ENCODE measurements at regions of chr1 and their contacts with region 1.

Region 1: GRCh38 chr1:65687428-65688214 is 105.1 kb upstream of the PDE4B start:
- DNase-seq: peak; percentile 43
- ATAC-seq: peak; percentile 95
- H3K4me3 ChIP-seq: no peak overlapping the region
- H3K27ac ChIP-seq: no peak overlapping the region
- H3K4me1 ChIP-seq: no peaks in the 10 kb centered on the region
- H3K27me3 ChIP-seq: no peaks in the 10 kb centered on the region
- CTCF ChIP-seq: peak; percentile 71 to 88 (median 82)
- POLR2A ChIP-seq: no peak
- RAD21 ChIP-seq: peak; percentile 97

Region 2: GRCh38 chr1:64268653-64269557 is 1418.7 kb before region 1 on chr1:
- CTCF ChIA-PET with region 1: no interaction called
- POLR2A ChIA-PET with region 1: no interaction called
- RAD21 ChIA-PET with region 1: no interaction called
- intact Hi-C with region 1: loop called (anchors 2 kb)
- DNase-seq: peak; percentile 80
- ATAC-seq: peak; percentile 87
- H3K4me3 ChIP-seq: no peak overlapping the region
- H3K27ac ChIP-seq: no peak overlapping the region
- H3K4me1 ChIP-seq: peaks cover 0 to 2% of the 10 kb centered on the region in 2 experiments; a peak in 2 of 4 replicates
- H3K27me3 ChIP-seq: no peaks in the 10 kb centered on the region
- CTCF ChIP-seq: peak; percentile 54 to 80 (median 63)
- POLR2A ChIP-seq: no peak
- RAD21 ChIP-seq: peak; percentile 94

Region 3: GRCh38 chr1:65067491-65068201 is 620.0 kb before region 1 on chr1:
- CTCF ChIA-PET with region 1: interaction called, 19 read pairs
- POLR2A ChIA-PET with region 1: no interaction called
- RAD21 ChIA-PET with region 1: no interaction called
- intact Hi-C with region 1: loop called (anchors 1 kb)
- DNase-seq: peak; percentile 46
- ATAC-seq: peak; percentile 34
- H3K4me3 ChIP-seq: peak overlapping the region; percentile 68 to 76
- H3K27ac ChIP-seq: peak overlapping the region; percentile 94
- H3K4me1 ChIP-seq: peaks cover 10 to 23% of the 10 kb centered on the region in 2 experiments; a peak in 3 of 4 replicates
- H3K27me3 ChIP-seq: no peaks in the 10 kb centered on the region
- CTCF ChIP-seq: no peak
- POLR2A ChIP-seq: no peak
- RAD21 ChIP-seq: no peak

Region 4: GRCh38 chr1:65214340-65215027 is 473.1 kb before region 1 on chr1:
- CTCF ChIA-PET with region 1: interaction called, 19 read pairs
- POLR2A ChIA-PET with region 1: no interaction called
- RAD21 ChIA-PET with region 1: interaction called, 5 read pairs
- intact Hi-C with region 1: loop called (anchors 1 kb)
- DNase-seq: no peak
- ATAC-seq: no peak
- H3K4me3 ChIP-seq: no peak overlapping the region
- H3K27ac ChIP-seq: no peak overlapping the region
- H3K4me1 ChIP-seq: 0 out of 4 replicates have a peak, but pooled peaks cover 0 to 3% of the 10 kb centered on the region in 2 experiments
- H3K27me3 ChIP-seq: no peaks in the 10 kb centered on the region
- CTCF ChIP-seq: no peak
- POLR2A ChIP-seq: no peak
- RAD21 ChIP-seq: no peak

Region 5: DNA sequence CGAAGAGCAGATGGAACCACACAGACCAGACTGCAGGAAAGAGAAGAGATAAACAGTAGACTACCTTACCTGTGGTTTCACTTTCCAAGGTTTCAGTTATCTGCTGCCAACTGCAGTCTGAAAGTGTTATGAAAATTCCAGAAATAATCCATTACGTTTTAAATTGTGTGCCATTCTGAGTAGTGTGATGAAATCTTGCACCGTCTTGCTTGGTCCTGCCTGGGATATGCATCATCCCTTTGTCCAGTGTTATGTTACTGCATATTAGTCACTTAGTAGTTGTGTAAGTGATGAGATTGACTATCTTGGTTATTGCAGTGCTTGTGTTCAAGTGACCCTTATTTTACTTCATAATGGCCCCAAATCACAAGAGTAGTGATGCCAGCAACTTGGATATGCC is 344.3 kb before region 1 on chr1:
- CTCF ChIA-PET with region 1: no interaction called
- POLR2A ChIA-PET with region 1: no interaction called
- RAD21 ChIA-PET with region 1: no interaction called
- intact Hi-C with region 1: no loop called
- DNase-seq: no peak
- ATAC-seq: no peak
- H3K4me3 ChIP-seq: no peak overlapping the region
- H3K27ac ChIP-seq: no peak overlapping the region
- H3K4me1 ChIP-seq: peaks cover 5 to 12% of the 10 kb centered on the region in 2 experiments; a peak in 3 of 4 replicates
- H3K27me3 ChIP-seq: no peaks in the 10 kb centered on the region
- CTCF ChIP-seq: no peak
- POLR2A ChIP-seq: no peak
- RAD21 ChIP-seq: no peak

Region 6: GRCh38 chr1:65431111-65431705 is 256.4 kb before region 1 on chr1:
- CTCF ChIA-PET with region 1: interaction called, 11 read pairs
- POLR2A ChIA-PET with region 1: no interaction called
- RAD21 ChIA-PET with region 1: interaction called in 1 of 2 experiments, 3 read pairs
- intact Hi-C with region 1: loop called (anchors 1 kb)
- DNase-seq: no peak
- ATAC-seq: peak; percentile 63; the same call in 1 of the 2 replicates
- H3K4me3 ChIP-seq: no peak overlapping the region
- H3K27ac ChIP-seq: no peak overlapping the region
- H3K4me1 ChIP-seq: peaks cover 0 to 16% of the 10 kb centered on the region in 2 experiments; a peak in 2 of 4 replicates
- H3K27me3 ChIP-seq: no peaks in the 10 kb centered on the region
- CTCF ChIP-seq: peak; percentile 50 to 69 (median 54); a peak in 4 of 6 replicates
- POLR2A ChIP-seq: no peak
- RAD21 ChIP-seq: peak; percentile 57; the same call in 1 of the 2 replicates

Measured in HCT116 (cell line).